MCF 10A (cell line): ENCODE measurements at regions of chr16 and their contacts with region 1.

Region 1: DNA sequence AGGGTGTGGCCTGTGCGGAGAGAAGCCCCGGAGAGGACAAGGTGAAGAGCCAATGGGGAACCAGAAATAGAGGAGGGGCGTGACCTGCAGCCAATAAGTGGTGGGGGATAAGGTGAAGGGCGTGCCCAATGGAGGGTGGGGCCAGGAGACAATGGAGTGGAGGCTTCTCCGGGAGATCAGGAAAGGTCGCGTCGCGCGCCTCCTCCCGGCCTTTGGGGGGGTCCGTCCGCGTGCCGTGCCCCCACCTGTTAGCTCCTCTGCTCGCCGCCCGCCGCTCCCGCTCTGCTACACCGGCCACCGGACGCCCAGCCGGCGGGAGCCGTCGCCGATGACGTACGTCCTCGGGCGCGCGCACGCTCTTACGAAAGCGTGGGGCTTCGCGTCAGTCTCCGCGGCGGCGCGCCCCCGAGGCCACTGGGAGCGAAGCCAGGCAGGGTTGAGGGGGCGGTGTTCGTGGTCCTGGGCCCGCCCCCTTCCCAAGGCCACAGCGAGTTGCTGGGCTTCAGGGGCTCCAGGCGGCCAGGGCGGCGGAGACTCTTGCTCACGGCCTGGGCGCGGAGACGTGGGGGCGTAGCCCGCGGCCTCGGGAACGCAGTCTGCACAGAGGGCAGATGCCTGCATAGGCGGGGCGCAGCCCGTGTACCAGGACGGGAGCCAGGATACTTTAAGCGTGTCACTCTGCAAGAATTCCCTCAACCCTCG is at the start of gene MATCAP1:
- DNase-seq: peak; percentile 98
- H3K4me3 Mint-ChIP-seq: no peak within 1 kb of the TSS
- H3K27ac Mint-ChIP-seq: no peak within 1 kb of the TSS
- H3K4me1 Mint-ChIP-seq: peaks cover 10% of the 10 kb centered on the region
- H3K27me3 Mint-ChIP-seq: no peaks in the 10 kb centered on the region
- CTCF ChIP-seq: no peak
- total RNA-seq, gene MATCAP1: 18.1 and 18.7 TPM in 2 replicates

Region 2: DNA sequence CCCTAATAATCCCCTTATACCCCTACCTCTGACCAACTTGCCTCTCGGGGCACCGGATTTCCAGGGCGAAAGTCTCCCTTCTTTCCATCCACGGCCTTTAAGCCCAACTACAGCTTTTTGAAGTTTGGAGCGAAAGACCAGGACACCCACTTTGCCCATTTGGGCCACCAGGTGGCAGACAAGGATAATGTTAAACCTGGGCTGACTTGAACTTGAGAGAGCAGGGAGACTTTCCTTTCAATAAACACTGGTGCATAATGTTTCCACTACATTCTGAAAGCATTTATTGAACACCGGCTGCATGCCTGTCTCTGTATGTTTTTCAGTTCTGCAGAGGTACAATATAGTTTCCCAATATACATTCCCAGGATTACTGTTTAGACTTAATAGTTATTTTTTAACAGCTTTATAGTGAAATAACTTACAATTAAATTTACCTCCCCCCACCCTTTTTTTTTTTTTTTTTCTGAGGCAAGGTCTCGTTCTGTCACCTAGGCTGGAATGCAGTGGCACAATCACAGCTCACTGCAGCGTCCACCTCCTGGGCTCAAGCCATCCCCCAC is 229.6 kb before region 1 on chr16:
- CTCF ChIA-PET with region 1: interaction called, 4 read pairs
- POLR2A ChIA-PET with region 1: no interaction called
- intact Hi-C with region 1: loop called (anchors 1 kb)
- DNase-seq: peak; percentile 88
- H3K4me3 Mint-ChIP-seq: peak overlapping the region; percentile 51
- H3K27ac Mint-ChIP-seq: peak overlapping the region; percentile 70
- H3K4me1 Mint-ChIP-seq: peaks cover 17% of the 10 kb centered on the region
- H3K27me3 Mint-ChIP-seq: no peaks in the 10 kb centered on the region
- CTCF ChIP-seq: peak; percentile 67

Region 3: GRCh38 chr16:67159593-67160406 is 24.0 kb before region 1 on chr16 and contains the starts of genes FBXL8 and TRADD:
- CTCF ChIA-PET with region 1: interaction called, 10 read pairs
- POLR2A ChIA-PET with region 1: interaction called, 94 read pairs
- intact Hi-C with region 1: no loop called
- DNase-seq: peak; percentile 70
- H3K4me3 Mint-ChIP-seq: peak within 1 kb of the TSS; percentile 84
- H3K27ac Mint-ChIP-seq: peak within 1 kb of the TSS; percentile 63
- H3K4me1 Mint-ChIP-seq: peaks cover 9% of the 10 kb centered on the region
- H3K27me3 Mint-ChIP-seq: no peaks in the 10 kb centered on the region
- CTCF ChIP-seq: peak; percentile 56
- total RNA-seq, gene FBXL8: 15.9 and 17.2 TPM in 2 replicates
- total RNA-seq, gene TRADD: 12.9 and 13.3 TPM in 2 replicates

Region 4: DNA sequence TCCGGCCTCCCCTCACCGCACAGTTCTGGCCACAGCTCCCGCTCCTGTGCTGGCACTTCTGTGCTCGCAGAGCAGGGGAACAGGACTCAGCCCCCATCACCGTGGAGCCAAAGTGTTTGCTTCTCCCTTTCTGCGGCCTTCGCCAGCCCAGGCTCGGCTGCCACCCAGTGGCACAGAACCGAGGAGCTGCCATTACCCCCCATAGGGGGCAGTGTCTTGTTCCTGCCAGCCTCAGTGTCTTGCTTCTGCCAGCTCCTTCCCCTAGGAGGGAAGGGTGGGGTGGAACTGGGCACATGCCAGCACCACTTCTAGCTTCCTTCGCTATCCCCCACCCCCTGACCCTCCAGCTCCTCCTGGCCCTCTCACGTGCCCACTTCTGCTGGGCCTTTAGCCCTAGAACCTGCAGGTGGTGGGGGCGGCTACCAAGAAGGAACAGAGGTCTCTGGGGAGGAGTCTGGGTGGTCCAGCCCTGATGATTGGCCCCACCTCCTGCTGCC is 14.5 kb after region 1 on chr16:
- CTCF ChIA-PET with region 1: interaction called, 11 read pairs
- POLR2A ChIA-PET with region 1: interaction called, 18 read pairs
- intact Hi-C with region 1: no loop called
- DNase-seq: peak; percentile 84
- H3K4me3 Mint-ChIP-seq: peak overlapping the region; percentile 89
- H3K27ac Mint-ChIP-seq: peak overlapping the region; percentile 55
- H3K4me1 Mint-ChIP-seq: peaks cover 34% of the 10 kb centered on the region
- H3K27me3 Mint-ChIP-seq: no peaks in the 10 kb centered on the region
- CTCF ChIP-seq: peak; percentile 74